Left ventricle myocardium inferior (tissue), 1 donor: ENCODE measurements at regions of chr14 and their contacts with region 1.

Region 1: GRCh38 chr14:34997762-34998161 is 15.0 kb downstream of the SRP54 start:
- DNase-seq: no peak
- H3K4me3 ChIP-seq: no peak overlapping the region
- H3K27ac ChIP-seq: no peak overlapping the region
- H3K4me1 ChIP-seq: peaks cover 4% of the 10 kb centered on the region
- H3K27me3 ChIP-seq: no peaks in the 10 kb centered on the region
- CTCF ChIP-seq: no peak

Region 2: GRCh38 chr14:35046048-35046741 is 48.4 kb after region 1 on chr14 and contains the start of gene FAM177A1:
- intact Hi-C with region 1: loop called (anchors 10 kb)
- DNase-seq: peak; percentile 99
- H3K4me3 ChIP-seq: peak within 1 kb of the TSS; percentile 84
- H3K27ac ChIP-seq: peak within 1 kb of the TSS; percentile 95
- H3K4me1 ChIP-seq: peaks cover 61% of the 10 kb centered on the region
- H3K27me3 ChIP-seq: no peaks in the 10 kb centered on the region
- CTCF ChIP-seq: no peak
- total RNA-seq, gene FAM177A1: 82.4 TPM